ENCODE measurements at regions of chr2 and their contacts with region 1.

Region 1: GRCh38 chr2:190569994-190570755 is 35.7 kb upstream of the NEMP2 start:
- DNase-seq: no peak

Region 2: DNA sequence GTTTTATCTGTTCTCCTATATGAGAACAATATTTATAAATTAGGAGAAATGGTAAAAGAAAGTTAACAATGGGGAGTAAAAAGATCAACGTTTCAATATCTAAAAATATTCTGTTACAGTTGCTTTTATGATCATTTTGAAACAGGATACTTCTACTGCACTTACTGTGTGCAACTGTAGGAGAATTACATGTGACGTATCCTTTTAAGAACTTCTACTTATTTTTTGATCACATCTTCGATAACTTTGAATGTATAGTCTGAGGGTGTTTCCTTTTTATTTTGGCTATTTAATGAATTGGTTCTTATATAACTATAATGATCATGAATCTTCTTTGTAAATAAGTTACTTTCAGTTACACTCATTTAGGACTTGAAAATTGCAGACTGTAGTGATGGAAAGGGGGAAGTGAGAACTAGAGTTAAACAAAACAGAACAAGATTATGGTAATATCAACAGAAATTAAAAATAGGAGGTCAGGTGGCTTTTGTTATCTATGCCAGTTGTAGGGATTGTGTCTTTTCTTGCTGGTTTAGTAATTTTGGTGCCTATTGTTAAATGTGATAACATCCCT is 617.6 kb before region 1 on chr2:
- intact Hi-C with region 1: no loop called
- DNase-seq: no peak

Region 3: DNA sequence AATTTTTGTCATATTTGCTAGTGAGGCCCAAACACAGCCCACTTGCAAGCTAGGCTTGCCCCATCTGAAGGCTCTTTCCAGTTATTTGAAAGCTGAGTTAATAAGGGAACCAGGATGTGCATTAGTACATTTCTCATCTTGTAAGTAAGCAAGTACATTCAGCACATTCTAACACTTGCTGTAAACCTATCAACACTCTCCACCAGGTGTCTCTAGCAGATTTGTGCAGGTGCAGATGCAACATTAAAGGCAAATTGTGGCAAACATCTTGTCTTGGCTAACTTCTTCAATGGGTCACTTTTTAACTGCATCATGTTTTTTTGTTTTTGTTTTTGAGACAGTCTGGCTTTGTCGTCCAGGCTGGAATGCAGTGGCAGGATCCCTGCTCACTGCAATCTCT is 187.3 kb before region 1 on chr2:
- intact Hi-C with region 1: no loop called
- DNase-seq: no peak

Region 4: GRCh38 chr2:190592831-190593230 is 22.7 kb after region 1 on chr2:
- intact Hi-C with region 1: loop called in 1 of 2 experiments (anchors 1 kb)
- DNase-seq: no peak

Measured in posterior vena cava (tissue), 2 donors.